ENCODE measurements at regions of chr12 and their contacts with region 1.

Region 1: DNA sequence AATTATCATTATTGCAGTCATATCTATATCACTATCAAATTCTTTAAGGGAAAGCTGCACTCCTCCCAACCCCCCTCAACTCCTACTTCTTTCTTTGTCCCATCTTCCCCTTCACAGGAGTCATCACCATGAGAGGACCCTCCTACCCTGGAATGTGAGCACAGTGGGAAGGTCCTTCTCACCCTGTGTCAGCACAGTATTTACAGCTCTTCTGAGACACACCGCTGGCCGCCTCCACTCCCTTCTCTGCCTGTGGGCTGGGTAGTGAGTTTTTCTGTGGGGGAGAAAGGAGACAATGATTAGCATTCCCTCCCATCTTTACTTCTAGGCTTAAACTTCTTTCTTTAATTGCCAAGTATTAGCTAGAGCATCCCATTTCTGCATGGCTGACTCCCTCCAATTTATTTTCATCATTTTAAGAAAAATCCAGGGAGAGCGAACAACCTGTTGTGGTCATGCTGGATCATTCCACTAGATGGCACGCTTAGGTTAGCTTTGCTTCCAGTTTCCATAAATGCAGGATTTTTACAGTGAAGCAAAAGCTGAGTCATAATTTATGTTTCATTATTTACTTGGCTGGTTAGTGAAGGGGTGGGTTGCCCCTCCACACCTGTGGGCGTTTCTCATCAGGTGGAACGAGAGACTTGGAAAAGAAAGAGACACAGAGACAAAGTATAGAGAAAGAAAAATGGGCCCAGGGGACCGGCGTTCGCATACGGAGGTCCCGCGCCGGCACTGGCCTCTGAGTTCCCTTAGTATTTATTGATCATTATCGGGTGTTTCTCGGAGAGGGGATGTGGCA is 188.5 kb downstream of the ALX1 start:
- DNase-seq: peak; percentile 47
- H3K4me3 ChIP-seq: peak overlapping the region; percentile 42 to 51; a peak in 3 of 4 replicates
- H3K27ac ChIP-seq: no peak overlapping the region
- H3K4me1 ChIP-seq: peaks cover 0 to 9% of the 10 kb centered on the region in 2 experiments; a peak in 1 of 4 replicates
- H3K27me3 ChIP-seq: no peaks in the 10 kb centered on the region
- CTCF ChIP-seq: peak; percentile 91
- EP300 ChIP-seq: no peak
- RAD21 ChIP-seq: peak; percentile 85

Region 2: DNA sequence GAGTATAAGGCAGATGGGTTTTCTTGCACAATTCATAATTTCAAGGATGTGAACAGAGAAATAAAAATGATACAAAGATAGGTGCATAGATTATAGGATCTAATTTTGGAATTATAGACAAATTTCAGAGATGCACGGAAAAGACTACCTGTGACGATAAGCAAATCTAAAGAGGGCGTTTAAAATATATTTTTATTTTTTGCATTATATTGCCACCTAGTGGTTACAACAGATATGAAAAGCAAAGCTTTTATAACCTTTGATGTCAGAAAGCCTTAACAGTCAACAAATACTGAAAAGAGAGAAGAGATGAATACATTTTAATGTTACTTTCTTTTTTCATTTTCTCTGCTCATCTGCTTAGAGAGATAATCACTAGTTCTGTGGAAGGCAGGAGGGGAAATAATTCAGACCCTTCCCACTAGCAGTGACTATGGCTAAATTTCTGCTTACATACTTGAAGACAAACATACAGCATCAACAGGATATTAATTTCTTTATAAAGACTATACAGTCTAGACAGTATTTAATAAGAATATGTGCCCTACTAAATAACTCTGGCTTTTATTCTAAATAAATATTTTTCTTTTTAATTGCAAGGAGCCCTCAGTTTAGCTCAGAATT is 451.9 kb after region 1 on chr12:
- CTCF ChIA-PET with region 1: interaction called, 19 read pairs
- POLR2A ChIA-PET with region 1: no interaction called
- DNase-seq: peak; percentile 32
- H3K4me3 ChIP-seq: no peak overlapping the region; a peak in 1 of 4 replicates
- H3K27ac ChIP-seq: no peak overlapping the region
- H3K4me1 ChIP-seq: no peaks in the 10 kb centered on the region
- H3K27me3 ChIP-seq: no peaks in the 10 kb centered on the region
- CTCF ChIP-seq: peak; percentile 75
- EP300 ChIP-seq: no peak
- RAD21 ChIP-seq: peak; percentile 68

Region 3: GRCh38 chr12:86213012-86213411 is 744.5 kb after region 1 on chr12:
- CTCF ChIA-PET with region 1: no interaction called
- POLR2A ChIA-PET with region 1: no interaction called
- DNase-seq: peak; percentile 46
- H3K4me3 ChIP-seq: no peak overlapping the region
- H3K27ac ChIP-seq: peak overlapping the region; percentile 1 to 34; a peak in 3 of 4 replicates
- H3K4me1 ChIP-seq: peaks cover 0 to 3% of the 10 kb centered on the region in 2 experiments; a peak in 2 of 4 replicates
- H3K27me3 ChIP-seq: no peaks in the 10 kb centered on the region
- CTCF ChIP-seq: no peak
- EP300 ChIP-seq: peak; percentile 74 to 84; a peak in 3 of 4 replicates
- RAD21 ChIP-seq: peak; percentile 25; the same call in 1 of the 2 replicates